ENCODE measurements at regions of chr1 and their contacts with region 1.

Region 1: DNA sequence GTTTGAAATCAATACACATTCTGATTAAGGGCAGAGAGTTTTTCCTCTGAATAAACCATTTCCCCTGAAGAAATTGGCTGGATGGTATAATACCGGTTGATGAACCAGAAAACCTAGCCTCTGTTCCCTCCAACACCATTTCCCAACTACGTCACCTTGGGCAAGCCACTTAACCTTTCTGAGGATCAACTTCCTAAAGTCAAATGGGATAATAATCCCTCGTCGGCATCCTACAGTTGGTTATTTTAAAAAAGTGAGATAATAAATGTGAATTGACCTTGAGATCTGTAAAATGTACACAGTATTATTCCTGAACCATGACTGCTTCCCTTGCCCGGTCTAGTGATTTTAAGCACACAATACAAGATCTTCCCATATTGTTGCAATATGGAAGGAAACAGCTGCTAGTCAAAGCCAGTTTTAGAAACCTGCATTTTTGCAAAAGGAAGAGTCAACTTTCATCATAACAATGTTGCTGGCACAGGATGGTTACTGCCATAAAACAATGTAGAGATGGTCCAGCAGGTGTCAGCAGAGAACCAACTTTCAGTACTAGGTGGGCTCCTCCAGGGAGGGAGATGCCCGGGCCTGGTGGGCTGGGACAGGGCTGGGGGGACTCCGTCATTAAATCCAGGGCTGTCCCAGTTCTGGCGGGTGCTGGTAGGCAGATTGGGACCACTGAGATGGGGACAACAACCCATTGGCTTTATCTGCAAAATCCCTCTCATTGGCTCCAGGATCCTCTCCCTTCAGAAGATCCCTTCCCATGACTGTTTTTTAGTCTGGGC is 5.2 kb upstream of the HLX start:
- DNase-seq: peak; percentile 50
- H3K4me3 ChIP-seq: no peak overlapping the region
- H3K27ac ChIP-seq: peak overlapping the region; percentile 2 to 99 (median 50)
- H3K4me1 ChIP-seq: peaks cover 7 to 62% (median 23%) of the 10 kb centered on the region in 4 donors
- H3K27me3 ChIP-seq: peaks cover 27% of the 10 kb centered on the region
- CTCF ChIP-seq: peak; percentile 52 to 66 (median 60)
- EP300 ChIP-seq: no peak
- POLR2A ChIP-seq: no peak

Region 2: GRCh38 chr1:221187174-221187573 is 313.1 kb after region 1 on chr1:
- in situ Hi-C with region 1: loop called in 1 of 4 experiments (anchors 25 kb)
- intact Hi-C with region 1: no loop called
- DNase-seq: no peak
- H3K4me3 ChIP-seq: no peak overlapping the region
- H3K27ac ChIP-seq: no peak overlapping the region
- H3K4me1 ChIP-seq: no peaks in the 10 kb centered on the region
- H3K27me3 ChIP-seq: no peaks in the 10 kb centered on the region
- CTCF ChIP-seq: no peak
- EP300 ChIP-seq: no peak
- POLR2A ChIP-seq: no peak

Region 3: DNA sequence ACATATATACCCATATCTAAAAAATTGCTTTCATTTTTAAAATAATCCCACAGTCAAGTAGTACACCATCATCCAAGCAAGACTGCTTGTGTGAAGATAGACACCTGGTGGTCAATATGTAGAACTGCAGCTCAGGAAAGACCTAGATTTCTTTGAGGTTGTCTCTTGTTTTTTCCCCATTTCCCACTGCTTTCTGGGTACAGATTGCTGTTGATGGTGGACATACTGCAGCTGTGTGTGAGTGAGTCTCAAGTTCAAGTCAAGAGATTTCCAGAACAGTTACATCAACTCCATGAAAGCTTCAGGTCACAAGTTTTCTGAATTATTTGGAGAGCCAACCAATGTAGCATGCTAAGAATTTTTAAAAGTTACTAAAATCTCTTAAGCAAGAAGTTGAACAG is 561.4 kb after region 1 on chr1:
- in situ Hi-C with region 1: loop called in 2 of 4 experiments (anchors 10 to 25 kb)
- intact Hi-C with region 1: loop called (anchors 2 kb)
- DNase-seq: no peak
- H3K4me3 ChIP-seq: no peak overlapping the region
- H3K27ac ChIP-seq: no peak overlapping the region
- H3K4me1 ChIP-seq: peaks cover 3 to 22% (median 7%) of the 10 kb centered on the region in 4 donors
- H3K27me3 ChIP-seq: no peaks in the 10 kb centered on the region
- CTCF ChIP-seq: peak; percentile 76 to 96 (median 91)
- EP300 ChIP-seq: no peak
- POLR2A ChIP-seq: no peak